K562 (cell line): ENCODE measurements at regions of chrX and their contacts with region 1.

Region 1: DNA sequence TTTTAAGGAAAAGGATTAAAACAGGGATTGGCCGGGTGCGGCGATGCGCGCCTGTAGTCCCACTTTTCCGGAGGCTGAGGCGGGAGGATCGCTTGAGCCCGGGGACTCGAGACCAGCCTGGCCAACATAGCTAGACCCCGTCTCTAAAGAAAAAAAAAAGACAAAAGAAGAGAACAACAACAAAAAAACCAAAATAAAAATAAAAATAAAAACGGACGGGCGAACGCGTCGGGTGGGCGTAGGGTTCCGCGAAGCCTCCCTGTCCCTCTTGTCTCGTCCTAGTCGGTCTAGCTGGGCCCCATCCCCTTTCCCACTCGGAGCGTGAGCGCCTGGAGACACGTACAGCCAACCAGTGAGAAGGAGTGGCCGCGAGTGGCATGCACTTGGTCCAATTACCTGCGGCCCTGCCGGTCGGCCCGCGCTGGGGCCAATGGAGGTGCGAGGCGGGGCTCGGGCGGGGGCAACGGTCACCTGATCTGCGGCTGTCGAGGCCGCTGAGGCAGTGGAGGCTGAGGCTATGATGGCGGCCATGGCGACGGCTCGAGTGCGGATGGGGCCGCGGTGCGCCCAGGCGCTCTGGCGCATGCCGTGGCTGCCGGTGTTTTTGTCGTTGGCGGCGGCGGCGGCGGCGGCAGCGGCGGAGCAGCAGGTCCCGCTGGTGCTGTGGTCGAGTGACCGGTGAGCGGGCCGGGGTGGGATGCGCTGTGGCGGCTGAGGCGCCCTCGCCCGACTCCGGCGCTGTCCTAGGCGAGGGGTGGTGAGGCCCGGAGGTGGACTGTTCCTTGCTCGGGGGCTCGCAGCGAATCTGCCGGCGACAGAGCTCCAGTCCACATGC is at the start of gene ATP6AP1:
- DNase-seq: peak; percentile 85 to 95 (median 93)
- ATAC-seq: peak; percentile 97
- H3K4me3 ChIP-seq: peak within 1 kb of the TSS; percentile 79
- H3K27ac ChIP-seq: peak within 1 kb of the TSS; percentile 66
- H3K4me1 ChIP-seq: peaks cover 27 to 51% of the 10 kb centered on the region in 2 experiments; a peak in 4 of 5 replicates
- H3K27me3 ChIP-seq: no peaks in the 10 kb centered on the region
- CTCF ChIP-seq: peak in 2 of 3 experiments; percentile 17 to 20; a peak in 2 of 6 replicates
- EP300 ChIP-seq: no peak
- POLR2A ChIP-seq: peak; percentile 69
- RAD21 ChIP-seq: 0 out of 4 replicates have a peak, but pooled peaks of 1 of the 2 experiments have one; percentile 7
- polyA plus RNA-seq, gene ATP6AP1: 8.3 to 12.3 TPM

Region 2: DNA sequence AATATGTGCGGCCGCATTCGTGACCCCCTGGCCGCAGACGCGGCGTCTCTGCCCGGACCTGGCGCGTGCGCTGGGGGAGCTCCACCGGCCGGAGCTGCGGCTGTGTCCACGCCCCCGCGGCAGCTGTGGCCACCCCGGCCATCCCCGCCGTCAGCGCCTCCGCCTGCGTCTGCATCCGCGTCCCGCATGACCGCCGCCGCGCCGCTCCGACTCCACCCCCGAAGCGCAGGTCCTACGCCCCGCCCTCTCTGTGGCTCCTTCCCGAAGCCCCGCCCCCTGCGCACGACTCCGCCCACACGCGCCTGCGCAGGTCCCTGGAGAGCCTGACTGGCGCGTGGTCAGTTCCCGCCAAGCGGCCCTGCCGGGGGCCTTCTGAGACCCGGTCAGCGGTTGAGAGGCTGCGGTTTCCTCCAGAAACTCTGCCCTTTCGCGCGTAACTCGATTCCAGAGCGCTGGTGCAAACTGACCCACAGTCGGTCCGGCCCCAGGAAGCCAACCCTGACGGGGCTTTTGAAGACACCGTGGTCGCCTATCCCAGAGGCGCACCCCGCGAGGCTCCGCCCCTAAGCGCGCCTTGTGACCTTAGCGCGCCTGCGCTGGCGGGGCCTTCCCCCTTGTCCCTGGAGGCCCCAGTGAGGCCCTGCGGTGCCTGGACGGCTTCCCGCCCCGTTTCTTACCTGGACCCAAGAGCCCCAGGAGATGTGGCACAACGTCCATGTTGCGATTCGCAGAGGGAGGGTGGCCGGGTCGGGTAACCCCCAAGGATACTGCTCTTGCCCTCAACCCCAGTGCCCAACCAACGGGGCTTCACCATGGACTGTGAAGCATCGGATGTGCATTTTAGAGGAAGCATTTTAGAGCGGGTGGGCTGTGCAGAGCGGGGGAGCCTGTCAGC is 50.6 kb after region 1 on chrX and contains the start of gene LAGE3:
- CTCF ChIA-PET with region 1: no interaction called
- POLR2A ChIA-PET with region 1: interaction called, 3 read pairs
- in situ Hi-C with region 1: no loop called
- intact Hi-C with region 1: loop called (anchors 2 kb)
- DNase-seq: peak; percentile 87 to 95 (median 92)
- ATAC-seq: peak; percentile 92
- H3K4me3 ChIP-seq: peak within 1 kb of the TSS; percentile 60
- H3K27ac ChIP-seq: peak within 1 kb of the TSS; percentile 94
- H3K4me1 ChIP-seq: peaks cover 36 to 46% of the 10 kb centered on the region in 2 experiments
- H3K27me3 ChIP-seq: no peaks in the 10 kb centered on the region
- CTCF ChIP-seq: no peak; a peak in 1 of 6 replicates
- EP300 ChIP-seq: peak; percentile 7; the same call in 1 of the 2 replicates
- POLR2A ChIP-seq: peak; percentile 75
- RAD21 ChIP-seq: no peak
- polyA plus RNA-seq, gene LAGE3: 28.2 to 31.1 TPM

Region 3: GRCh38 chrX:154484255-154485154 is 56.1 kb after region 1 on chrX:
- CTCF ChIA-PET with region 1: no interaction called
- POLR2A ChIA-PET with region 1: interaction called, 4 read pairs
- in situ Hi-C with region 1: no loop called
- intact Hi-C with region 1: loop called (anchors 2 kb)
- DNase-seq: peak; percentile 35 to 92 (median 61)
- ATAC-seq: peak; percentile 88
- H3K4me3 ChIP-seq: peak overlapping the region; percentile 83
- H3K27ac ChIP-seq: peak overlapping the region; percentile 87
- H3K4me1 ChIP-seq: peaks cover 48 to 84% of the 10 kb centered on the region in 2 experiments
- H3K27me3 ChIP-seq: no peaks in the 10 kb centered on the region
- CTCF ChIP-seq: no peak
- EP300 ChIP-seq: peak; percentile 79
- POLR2A ChIP-seq: peak; percentile 71
- RAD21 ChIP-seq: no peak

Region 4: GRCh38 chrX:154526901-154527675 is 98.7 kb after region 1 on chrX:
- CTCF ChIA-PET with region 1: no interaction called
- POLR2A ChIA-PET with region 1: no interaction called
- in situ Hi-C with region 1: no loop called
- intact Hi-C with region 1: loop called (anchors 5 kb)
- DNase-seq: peak; percentile 67 to 86 (median 70)
- ATAC-seq: peak; percentile 95
- H3K4me3 ChIP-seq: no peak overlapping the region
- H3K27ac ChIP-seq: peak overlapping the region; percentile 68
- H3K4me1 ChIP-seq: peaks cover 8 to 17% of the 10 kb centered on the region in 2 experiments; a peak in 4 of 5 replicates
- H3K27me3 ChIP-seq: no peaks in the 10 kb centered on the region
- CTCF ChIP-seq: peak; percentile 71 to 76 (median 76)
- EP300 ChIP-seq: no peak; the same call in 1 of the 2 replicates
- POLR2A ChIP-seq: 0 out of 2 replicates have a peak, but pooled peaks have one; percentile 39
- RAD21 ChIP-seq: peak; percentile 24 to 60; a peak in 3 of 4 replicates